ENCODE measurements at regions of chr1 and their contacts with region 1.

Region 1: DNA sequence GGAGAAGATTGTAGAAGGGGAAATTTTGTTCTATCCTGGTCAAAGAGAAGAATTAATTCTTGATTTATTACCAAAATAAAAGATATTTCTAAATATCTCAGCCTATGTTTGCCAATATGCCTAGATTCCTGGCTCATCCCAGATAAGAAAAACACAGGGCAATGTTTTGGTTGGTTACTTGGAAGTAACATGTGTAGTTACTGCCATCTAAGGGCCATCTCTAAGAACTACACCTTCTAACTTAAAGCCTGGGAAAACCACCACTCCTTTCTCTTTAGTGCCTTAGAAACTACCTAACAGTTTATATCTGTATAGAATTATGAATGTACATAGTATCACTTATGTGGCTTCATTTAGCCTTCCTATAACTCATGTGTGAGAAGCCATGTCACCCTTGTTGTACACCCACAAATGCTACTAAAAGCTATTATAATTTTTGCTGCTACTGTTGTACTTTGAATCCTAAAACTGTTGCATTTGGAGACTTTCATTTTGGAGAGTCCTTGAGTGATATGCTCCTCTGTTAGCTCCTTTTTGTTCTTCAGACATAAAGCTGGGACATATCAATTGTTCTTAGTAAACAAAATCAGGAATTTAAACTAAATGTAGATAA is 4.5 kb downstream of the AIM2 start:
- DNase-seq: peak in 1 of 2 experiments; percentile 47
- H3K4me3 ChIP-seq: no peak overlapping the region
- H3K4me3 Mint-ChIP-seq: no peak overlapping the region
- H3K27ac Mint-ChIP-seq: no peak overlapping the region
- H3K4me1 ChIP-seq: no peaks in the 10 kb centered on the region
- H3K4me1 Mint-ChIP-seq: no peaks in the 10 kb centered on the region
- H3K27me3 ChIP-seq: no peaks in the 10 kb centered on the region
- H3K27me3 Mint-ChIP-seq: peaks cover 2% of the 10 kb centered on the region
- CTCF ChIP-seq: peak; percentile 46 to 53

Region 2: DNA sequence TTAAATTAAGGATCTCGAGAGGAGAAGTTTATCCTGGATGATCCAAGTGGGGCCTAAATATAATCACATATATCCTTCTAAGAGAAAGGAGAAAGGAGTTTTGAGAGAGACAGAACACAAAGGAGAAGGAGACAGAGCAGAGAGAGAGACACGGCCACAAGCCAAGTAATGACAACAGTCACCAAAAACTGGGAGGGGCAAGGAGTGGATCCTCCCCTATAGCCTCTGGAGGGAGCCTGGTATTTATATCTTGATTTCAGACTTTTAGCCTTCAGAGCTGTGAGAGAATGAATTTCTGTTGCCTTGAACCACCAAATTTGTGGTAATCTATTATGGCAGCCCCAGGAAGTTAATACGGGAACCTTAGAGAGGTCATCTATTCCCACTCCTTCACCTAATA is 940.9 kb before region 1 on chr1:
- CTCF ChIA-PET with region 1: no interaction called
- POLR2A ChIA-PET with region 1: no interaction called
- intact Hi-C with region 1: loop called (anchors 10 kb)
- DNase-seq: no peak
- H3K4me3 ChIP-seq: no peak overlapping the region
- H3K4me3 Mint-ChIP-seq: no peak overlapping the region
- H3K27ac Mint-ChIP-seq: no peak overlapping the region
- H3K4me1 ChIP-seq: no peaks in the 10 kb centered on the region
- H3K4me1 Mint-ChIP-seq: no peaks in the 10 kb centered on the region
- H3K27me3 ChIP-seq: no peaks in the 10 kb centered on the region
- H3K27me3 Mint-ChIP-seq: peaks cover 7% of the 10 kb centered on the region
- CTCF ChIP-seq: no peak

Region 3: DNA sequence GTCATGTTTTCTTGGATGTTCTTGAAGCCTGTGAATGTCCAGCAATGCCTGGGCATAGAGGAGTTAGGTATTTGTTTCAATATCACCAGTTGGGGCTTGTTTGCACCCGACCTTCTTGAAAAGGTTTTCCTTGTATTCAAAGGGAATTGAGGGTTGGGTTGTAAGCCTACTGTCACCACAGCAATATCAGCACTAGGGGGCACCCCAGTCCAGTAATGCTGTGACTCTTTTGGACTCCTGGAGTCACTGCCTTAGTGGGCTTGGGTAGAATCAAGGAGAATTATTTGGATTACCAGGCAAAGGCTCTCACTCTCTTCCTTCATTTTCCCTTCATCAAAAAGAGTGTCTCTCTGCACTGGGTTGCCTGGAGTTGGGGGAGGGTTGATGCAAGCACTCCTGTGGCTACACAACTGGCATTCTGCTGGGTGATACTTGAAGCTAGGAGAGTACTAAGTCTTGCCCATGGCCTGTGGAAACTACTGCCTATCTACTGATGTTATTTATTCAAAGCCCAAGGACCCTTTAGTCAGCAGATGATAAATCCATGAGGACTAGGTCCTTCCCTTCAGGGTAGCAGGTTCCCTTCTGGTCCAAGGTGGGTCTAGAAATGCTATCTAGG is 565.6 kb before region 1 on chr1:
- CTCF ChIA-PET with region 1: no interaction called
- POLR2A ChIA-PET with region 1: no interaction called
- intact Hi-C with region 1: loop called (anchors 1 kb)
- DNase-seq: peak; percentile 37 to 41
- H3K4me3 ChIP-seq: no peak overlapping the region
- H3K4me3 Mint-ChIP-seq: no peak overlapping the region
- H3K27ac Mint-ChIP-seq: no peak overlapping the region
- H3K4me1 ChIP-seq: no peaks in the 10 kb centered on the region
- H3K4me1 Mint-ChIP-seq: no peaks in the 10 kb centered on the region
- H3K27me3 ChIP-seq: no peaks in the 10 kb centered on the region; the same call in 1 of the 2 replicates
- H3K27me3 Mint-ChIP-seq: peaks cover 2% of the 10 kb centered on the region
- CTCF ChIP-seq: peak; percentile 29 to 36

Region 4: GRCh38 chr1:158527190-158527815 is 544.8 kb before region 1 on chr1:
- CTCF ChIA-PET with region 1: no interaction called
- POLR2A ChIA-PET with region 1: no interaction called
- intact Hi-C with region 1: no loop called
- DNase-seq: peak in 1 of 2 experiments; percentile 17
- H3K4me3 ChIP-seq: no peak overlapping the region
- H3K4me3 Mint-ChIP-seq: no peak overlapping the region
- H3K27ac Mint-ChIP-seq: no peak overlapping the region
- H3K4me1 ChIP-seq: no peaks in the 10 kb centered on the region
- H3K4me1 Mint-ChIP-seq: no peaks in the 10 kb centered on the region
- H3K27me3 ChIP-seq: no peaks in the 10 kb centered on the region
- H3K27me3 Mint-ChIP-seq: peaks cover 13% of the 10 kb centered on the region
- CTCF ChIP-seq: peak; percentile 61 to 69

Region 5: GRCh38 chr1:158933621-158934020 is 138.5 kb before region 1 on chr1:
- CTCF ChIA-PET with region 1: no interaction called
- POLR2A ChIA-PET with region 1: no interaction called
- intact Hi-C with region 1: no loop called
- DNase-seq: no peak
- H3K4me3 ChIP-seq: no peak overlapping the region
- H3K4me3 Mint-ChIP-seq: no peak overlapping the region
- H3K27ac Mint-ChIP-seq: no peak overlapping the region
- H3K4me1 ChIP-seq: no peaks in the 10 kb centered on the region
- H3K4me1 Mint-ChIP-seq: no peaks in the 10 kb centered on the region
- H3K27me3 ChIP-seq: no peaks in the 10 kb centered on the region
- H3K27me3 Mint-ChIP-seq: no peaks in the 10 kb centered on the region
- CTCF ChIP-seq: no peak

Region 6: DNA sequence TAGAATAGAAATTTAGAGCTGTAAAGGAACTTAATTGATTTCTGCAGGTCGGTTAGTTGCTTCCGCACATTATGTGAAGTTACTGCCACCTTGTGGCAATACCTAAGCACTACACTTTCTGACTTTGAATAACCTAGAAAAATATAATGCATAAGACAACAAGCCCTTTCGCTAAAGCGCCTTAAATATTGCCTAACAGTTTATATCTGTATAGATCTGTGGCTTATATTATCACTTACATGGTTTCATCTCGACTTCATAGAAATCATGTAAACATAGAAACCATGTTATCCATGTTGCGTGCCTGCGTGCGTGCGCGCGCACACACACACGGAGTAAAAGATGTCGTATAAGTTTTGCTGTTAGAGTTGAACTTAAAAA is 73.3 kb before region 1 on chr1:
- CTCF ChIA-PET with region 1: no interaction called
- POLR2A ChIA-PET with region 1: no interaction called
- intact Hi-C with region 1: loop called (anchors 1 kb)
- DNase-seq: peak in 1 of 2 experiments; percentile 48
- H3K4me3 ChIP-seq: no peak overlapping the region
- H3K4me3 Mint-ChIP-seq: no peak overlapping the region
- H3K27ac Mint-ChIP-seq: no peak overlapping the region
- H3K4me1 ChIP-seq: no peaks in the 10 kb centered on the region
- H3K4me1 Mint-ChIP-seq: no peaks in the 10 kb centered on the region
- H3K27me3 ChIP-seq: no peaks in the 10 kb centered on the region
- H3K27me3 Mint-ChIP-seq: peaks cover 4% of the 10 kb centered on the region
- CTCF ChIP-seq: peak; percentile 74 to 79

Region 7: DNA sequence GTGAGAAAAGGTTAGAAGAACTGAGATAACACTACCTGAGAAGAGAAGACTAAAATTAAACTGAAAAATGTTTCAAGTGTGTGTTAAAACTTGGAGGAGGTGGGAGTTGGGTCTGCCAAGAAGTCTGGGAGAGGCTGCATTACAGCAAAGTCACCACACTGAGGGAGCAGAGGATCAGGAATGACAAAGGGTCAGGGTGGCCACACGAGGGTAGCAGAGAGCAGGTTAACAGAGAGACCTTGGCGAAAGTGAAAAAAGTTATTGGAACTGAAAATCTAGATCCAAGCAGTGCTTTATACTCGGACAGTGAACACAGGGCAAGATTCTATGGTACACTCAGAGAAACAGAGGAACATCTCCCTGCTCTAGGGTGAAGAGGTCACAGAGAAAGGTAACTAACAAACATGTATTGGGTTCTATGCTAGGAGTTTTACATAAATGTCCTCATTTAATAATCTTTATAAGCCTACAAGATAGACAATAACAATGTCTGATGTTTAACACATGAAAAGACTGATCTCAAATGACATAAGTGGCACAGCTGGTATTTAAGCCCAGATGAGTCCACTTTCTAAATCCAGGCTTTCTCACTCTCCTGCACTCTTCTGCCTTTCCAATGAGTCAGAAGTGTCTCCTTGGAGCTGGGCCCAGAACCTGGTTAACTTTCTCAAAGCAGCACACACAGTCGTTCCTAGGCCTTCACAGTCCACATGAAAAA is 89.1 kb after region 1 on chr1:
- CTCF ChIA-PET with region 1: no interaction called
- POLR2A ChIA-PET with region 1: no interaction called
- intact Hi-C with region 1: no loop called
- DNase-seq: peak; percentile 74 to 82
- H3K4me3 ChIP-seq: no peak overlapping the region
- H3K4me3 Mint-ChIP-seq: no peak overlapping the region
- H3K27ac Mint-ChIP-seq: no peak overlapping the region
- H3K4me1 ChIP-seq: no peaks in the 10 kb centered on the region
- H3K4me1 Mint-ChIP-seq: no peaks in the 10 kb centered on the region
- H3K27me3 ChIP-seq: no peaks in the 10 kb centered on the region
- H3K27me3 Mint-ChIP-seq: peaks cover 20% of the 10 kb centered on the region
- CTCF ChIP-seq: peak; percentile 97 to 99

Measured in Caco-2 (cell line).